Panc1 (cell line): ENCODE measurements at regions of chr1 and their contacts with region 1.

Region 1: GRCh38 chr1:205791568-205792180 is 16.4 kb upstream of the RAB29 start:
- DNase-seq: peak; percentile 46
- ATAC-seq: peak; percentile 97
- H3K4me3 ChIP-seq: no peak overlapping the region
- H3K27ac ChIP-seq: no peak overlapping the region
- H3K4me1 ChIP-seq: no peaks in the 10 kb centered on the region; the same call in 1 of the 2 replicates
- H3K27me3 ChIP-seq: no peaks in the 10 kb centered on the region
- CTCF ChIP-seq: peak; percentile 90

Region 2: GRCh38 chr1:205396967-205397616 is 394.6 kb before region 1 on chr1:
- CTCF ChIA-PET with region 1: no interaction called
- POLR2A ChIA-PET with region 1: no interaction called
- in situ Hi-C with region 1: no loop called
- intact Hi-C with region 1: no loop called
- DNase-seq: peak; percentile 32
- ATAC-seq: peak; percentile 80
- H3K4me3 ChIP-seq: no peak overlapping the region
- H3K27ac ChIP-seq: no peak overlapping the region
- H3K4me1 ChIP-seq: no peaks in the 10 kb centered on the region
- H3K27me3 ChIP-seq: 0 out of 2 replicates have a peak, but pooled peaks cover 3% of the 10 kb centered on the region
- CTCF ChIP-seq: peak; percentile 81

Region 3: DNA sequence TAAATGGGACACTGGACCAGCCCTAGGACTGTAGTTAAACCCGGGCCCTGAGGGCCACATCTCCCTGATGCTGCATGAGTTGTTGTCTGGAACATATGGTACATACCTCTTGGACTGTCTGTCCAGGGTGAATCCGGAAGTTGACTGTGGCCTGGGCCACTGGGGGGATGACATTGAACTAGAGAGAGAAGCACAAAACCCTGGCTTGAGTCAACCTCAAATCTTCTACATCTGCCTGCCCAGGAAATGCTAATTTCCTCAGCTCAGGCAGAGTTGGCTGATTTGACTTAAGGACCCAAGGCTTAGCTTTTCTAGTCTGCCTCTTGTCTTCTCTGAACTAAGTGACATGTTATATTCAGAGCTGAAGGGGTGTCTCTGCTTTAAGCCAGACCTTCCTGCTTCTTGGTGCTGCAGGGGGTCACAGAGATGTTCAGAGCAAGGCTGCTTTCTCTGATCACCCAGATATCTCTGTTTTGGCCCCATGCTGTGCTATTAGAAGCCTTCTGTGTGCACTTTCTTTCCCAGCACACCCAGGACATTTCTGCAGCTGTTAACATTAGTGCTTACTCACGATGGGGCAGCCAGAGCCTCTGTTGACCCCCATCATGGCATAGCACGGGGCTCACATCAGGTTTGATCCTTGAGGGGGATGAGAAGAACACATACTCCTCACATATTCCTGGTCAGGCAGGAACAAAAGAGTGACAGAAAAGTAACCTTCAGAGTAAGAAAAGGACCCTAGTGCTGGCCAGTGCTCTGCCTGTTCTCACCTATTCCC is 48.7 kb after region 1 on chr1:
- CTCF ChIA-PET with region 1: no interaction called
- POLR2A ChIA-PET with region 1: interaction called, 18 read pairs
- in situ Hi-C with region 1: no loop called
- intact Hi-C with region 1: no loop called
- DNase-seq: no peak
- ATAC-seq: no peak
- H3K4me3 ChIP-seq: no peak overlapping the region
- H3K27ac ChIP-seq: no peak overlapping the region
- H3K4me1 ChIP-seq: no peaks in the 10 kb centered on the region
- H3K27me3 ChIP-seq: peaks cover 4% of the 10 kb centered on the region; the same call in 1 of the 2 replicates
- CTCF ChIP-seq: no peak

Region 4: GRCh38 chr1:205851993-205852615 is 60.4 kb after region 1 on chr1:
- CTCF ChIA-PET with region 1: no interaction called
- POLR2A ChIA-PET with region 1: no interaction called
- in situ Hi-C with region 1: no loop called
- intact Hi-C with region 1: no loop called
- DNase-seq: no peak
- ATAC-seq: no peak
- H3K4me3 ChIP-seq: no peak overlapping the region
- H3K27ac ChIP-seq: no peak overlapping the region
- H3K4me1 ChIP-seq: peaks cover 3% of the 10 kb centered on the region; the same call in 1 of the 2 replicates
- H3K27me3 ChIP-seq: 0 out of 2 replicates have a peak, but pooled peaks cover 4% of the 10 kb centered on the region
- CTCF ChIP-seq: no peak

Region 5: DNA sequence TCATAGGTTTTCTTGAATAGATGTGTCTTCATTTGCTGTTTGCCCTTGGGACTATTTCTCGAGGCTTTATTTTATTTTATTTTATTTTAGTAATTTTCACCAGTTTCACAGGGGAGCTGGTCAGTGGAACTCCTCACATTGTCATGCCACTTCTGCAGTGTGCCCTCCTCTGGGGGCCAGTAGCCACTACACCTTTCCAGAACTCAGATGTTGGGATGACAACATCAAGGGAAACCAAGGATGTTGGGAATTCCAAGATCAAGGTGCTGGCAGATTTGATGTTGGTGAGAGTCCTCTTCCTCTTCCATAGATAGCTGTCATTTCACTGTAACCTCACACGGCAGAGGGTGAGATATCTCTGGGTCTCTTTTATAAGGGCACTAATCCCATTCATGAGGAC is 116.1 kb after region 1 on chr1:
- CTCF ChIA-PET with region 1: interaction called, 10 read pairs
- POLR2A ChIA-PET with region 1: no interaction called
- in situ Hi-C with region 1: no loop called
- intact Hi-C with region 1: loop called (anchors 1 kb)
- DNase-seq: no peak
- ATAC-seq: peak; percentile 85
- H3K4me3 ChIP-seq: no peak overlapping the region
- H3K27ac ChIP-seq: no peak overlapping the region
- H3K4me1 ChIP-seq: no peaks in the 10 kb centered on the region
- H3K27me3 ChIP-seq: peaks cover 2% of the 10 kb centered on the region; the same call in 1 of the 2 replicates
- CTCF ChIP-seq: peak; percentile 82